Activated naive CD4-positive, alpha-beta T cell treated with anti-CD3 and anti-CD28 coated beads for 36 hours (primary cell): ENCODE measurements at regions of chr5 and their contacts with region 1.

Region 1: DNA sequence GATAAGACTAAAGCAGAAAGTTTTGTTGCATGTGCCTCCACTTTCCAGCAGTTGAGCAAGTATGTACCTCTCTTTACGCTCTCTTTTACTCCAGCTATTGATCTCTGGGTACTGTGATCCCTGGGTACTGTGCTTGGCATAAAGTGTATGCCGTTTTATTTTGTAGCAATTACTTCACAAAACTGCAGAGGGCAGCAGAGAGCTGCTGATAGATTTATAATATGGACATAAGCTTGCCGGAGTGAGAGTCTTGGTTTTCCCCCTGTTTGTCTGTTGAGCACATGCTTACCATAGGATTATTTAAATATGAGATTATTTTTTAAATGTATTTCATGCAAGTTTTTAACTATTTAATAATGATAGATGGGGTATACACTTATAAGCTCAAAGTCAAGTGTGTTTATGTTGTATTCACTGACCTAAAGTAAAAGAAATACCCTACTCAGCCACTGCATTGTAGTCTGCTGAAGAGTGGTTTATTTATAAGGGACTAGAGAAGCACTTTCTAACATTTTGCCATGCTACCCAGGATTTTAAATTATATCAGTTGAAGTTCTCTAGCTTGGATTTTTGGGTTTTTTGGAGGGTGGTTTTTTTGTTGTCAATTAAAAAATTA is 13.0 kb downstream of the TTC1 start:
- DNase-seq: peak; percentile 70
- H3K4me3 Mint-ChIP-seq: no peak overlapping the region
- H3K27ac Mint-ChIP-seq: no peak overlapping the region
- H3K4me1 Mint-ChIP-seq: peaks cover 24% of the 10 kb centered on the region
- H3K27me3 Mint-ChIP-seq: no peaks in the 10 kb centered on the region

Region 2: GRCh38 chr5:159459951-159460538 is 561.9 kb before region 1 on chr5:
- CTCF ChIA-PET with region 1: no interaction called
- intact Hi-C with region 1: no loop called
- DNase-seq: peak; percentile 10
- H3K4me3 Mint-ChIP-seq: no peak overlapping the region
- H3K27ac Mint-ChIP-seq: no peak overlapping the region
- H3K4me1 Mint-ChIP-seq: peaks cover 46% of the 10 kb centered on the region
- H3K27me3 Mint-ChIP-seq: peaks cover 7% of the 10 kb centered on the region

Region 3: GRCh38 chr5:159764283-159765134 is 257.4 kb before region 1 on chr5:
- CTCF ChIA-PET with region 1: no interaction called
- intact Hi-C with region 1: no loop called
- DNase-seq: peak; percentile 30
- H3K4me3 Mint-ChIP-seq: no peak overlapping the region
- H3K27ac Mint-ChIP-seq: no peak overlapping the region
- H3K4me1 Mint-ChIP-seq: peaks cover 5% of the 10 kb centered on the region
- H3K27me3 Mint-ChIP-seq: peaks cover 16% of the 10 kb centered on the region

Region 4: DNA sequence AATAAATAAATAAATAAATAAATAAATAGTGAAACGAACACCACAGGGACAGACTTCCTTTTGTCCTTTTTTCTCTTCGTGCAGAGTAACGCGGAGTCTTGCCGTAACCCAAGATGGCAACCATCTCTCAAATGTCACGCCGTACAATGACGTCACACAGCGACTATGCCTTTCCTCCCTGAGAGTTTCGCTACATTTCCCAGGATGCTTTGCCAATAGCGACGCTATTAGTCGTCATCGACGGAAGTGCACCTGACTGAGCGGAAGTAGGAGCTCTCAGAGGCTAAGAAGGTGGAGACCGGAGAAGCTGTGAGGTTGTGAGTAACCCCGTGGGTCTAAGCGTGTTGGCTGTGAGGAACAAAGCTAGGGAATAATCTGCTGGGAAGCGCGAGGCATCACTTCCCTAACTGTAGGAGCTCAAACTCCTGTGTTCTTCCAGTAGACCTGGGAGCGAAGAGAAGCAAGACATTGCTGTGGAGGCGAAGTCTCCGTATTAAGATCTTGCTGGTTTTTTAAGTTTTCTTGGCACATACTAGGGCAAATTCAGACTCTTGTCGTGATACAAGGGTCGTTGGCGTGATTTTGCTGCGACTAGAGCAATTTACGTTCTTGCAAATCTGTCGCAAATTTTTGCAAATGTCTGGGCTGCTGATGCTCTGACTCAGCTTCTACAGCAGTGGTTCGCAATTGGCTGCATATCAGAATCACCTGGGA is 12.9 kb before region 1 on chr5 and contains the start of gene TTC1:
- CTCF ChIA-PET with region 1: interaction called, 30 read pairs
- intact Hi-C with region 1: loop called (anchors 1 kb)
- DNase-seq: peak; percentile 98
- H3K4me3 Mint-ChIP-seq: peak within 1 kb of the TSS; percentile 98
- H3K27ac Mint-ChIP-seq: peak within 1 kb of the TSS; percentile 94
- H3K4me1 Mint-ChIP-seq: peaks cover 27% of the 10 kb centered on the region
- H3K27me3 Mint-ChIP-seq: no peaks in the 10 kb centered on the region
- total RNA-seq, gene TTC1: 46.0 to 47.1 TPM

Region 5: GRCh38 chr5:160152287-160152686 is 130.3 kb after region 1 on chr5:
- CTCF ChIA-PET with region 1: interaction called, 11 read pairs
- intact Hi-C with region 1: no loop called
- DNase-seq: no peak
- H3K4me3 Mint-ChIP-seq: no peak overlapping the region
- H3K27ac Mint-ChIP-seq: no peak overlapping the region
- H3K4me1 Mint-ChIP-seq: peaks cover 11% of the 10 kb centered on the region
- H3K27me3 Mint-ChIP-seq: no peaks in the 10 kb centered on the region

Region 6: GRCh38 chr5:160199410-160199911 is 177.5 kb after region 1 on chr5:
- CTCF ChIA-PET with region 1: interaction called, 4 read pairs
- intact Hi-C with region 1: loop called (anchors 1 kb)
- DNase-seq: peak; percentile 68
- H3K4me3 Mint-ChIP-seq: peak overlapping the region; percentile 65
- H3K27ac Mint-ChIP-seq: no peak overlapping the region
- H3K4me1 Mint-ChIP-seq: peaks cover 2% of the 10 kb centered on the region
- H3K27me3 Mint-ChIP-seq: peaks cover 9% of the 10 kb centered on the region

Region 7: DNA sequence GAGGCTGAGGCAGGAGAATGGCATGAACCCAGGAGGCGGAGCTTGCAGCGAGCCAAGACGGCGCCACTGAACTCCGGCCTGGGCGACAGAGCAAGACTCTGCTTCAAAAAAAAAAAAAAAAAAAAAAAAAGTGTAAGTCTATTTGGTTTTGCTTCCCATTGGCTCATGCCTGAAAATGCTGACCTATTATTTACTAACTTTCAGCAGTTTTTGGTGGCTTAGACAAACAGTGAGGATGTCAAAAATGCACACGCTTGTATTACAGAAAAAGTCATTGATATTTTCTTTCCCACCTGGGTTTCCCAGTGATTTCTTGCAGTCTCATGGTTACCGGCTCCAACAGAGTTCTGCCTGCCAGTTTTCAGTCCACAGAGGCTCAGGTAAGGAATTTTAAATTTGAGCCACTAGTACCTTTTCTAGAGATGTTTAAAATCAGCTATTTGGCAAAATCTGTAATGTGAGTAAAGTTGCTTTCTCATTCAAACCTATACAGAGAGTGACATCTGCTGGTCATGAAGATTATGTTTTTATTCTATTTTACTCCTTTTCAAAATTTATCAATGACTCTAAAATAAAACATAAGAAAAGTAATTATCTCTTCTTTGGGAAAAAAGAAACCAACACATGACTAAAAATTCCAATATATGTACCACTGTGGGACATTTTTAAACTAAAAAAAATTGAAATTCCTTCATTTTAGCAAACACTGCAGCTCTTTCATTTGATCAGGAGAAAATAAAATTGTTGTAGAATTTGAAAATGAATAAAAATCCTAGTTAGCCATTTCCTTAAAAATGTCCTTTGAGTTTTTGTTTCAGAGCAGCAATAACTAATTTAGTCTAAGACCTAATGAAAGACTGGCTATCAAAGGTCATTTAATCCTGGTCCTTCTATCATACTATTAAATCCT is 369.1 kb after region 1 on chr5:
- CTCF ChIA-PET with region 1: interaction called, 8 read pairs
- intact Hi-C with region 1: loop called (anchors 1 kb)
- DNase-seq: no peak
- H3K4me3 Mint-ChIP-seq: no peak overlapping the region
- H3K27ac Mint-ChIP-seq: no peak overlapping the region
- H3K4me1 Mint-ChIP-seq: no peaks in the 10 kb centered on the region
- H3K27me3 Mint-ChIP-seq: no peaks in the 10 kb centered on the region